Caco-2 (cell line): ENCODE measurements at regions of chr3 and their contacts with region 1.

Region 1: DNA sequence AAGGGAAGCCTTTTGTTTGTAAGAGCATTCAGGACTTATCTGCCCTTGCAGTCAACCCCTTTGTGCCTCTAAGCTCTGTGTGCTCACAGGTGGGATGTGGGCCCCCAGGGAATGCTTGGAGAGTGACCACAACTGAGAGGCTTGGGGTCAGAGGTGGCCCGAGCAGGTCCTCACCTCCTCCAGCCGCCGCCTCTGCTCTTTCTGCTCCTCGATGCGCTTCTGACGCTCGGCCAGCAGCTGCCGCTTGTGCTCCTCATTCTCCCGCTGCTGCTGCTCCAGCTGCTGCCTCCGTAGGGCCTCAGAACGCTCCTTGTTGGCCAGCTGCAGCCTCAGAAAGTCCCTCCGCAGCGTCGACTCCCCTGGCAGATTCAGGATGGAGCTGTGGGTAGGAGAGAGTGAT is 130.8 kb upstream of the SLC2A2 start:
- DNase-seq: peak; percentile 82 to 89
- H3K4me3 ChIP-seq: no peak overlapping the region
- H3K4me3 Mint-ChIP-seq: no peak overlapping the region
- H3K27ac Mint-ChIP-seq: peak overlapping the region; percentile 97
- H3K4me1 ChIP-seq: peaks cover 31% of the 10 kb centered on the region
- H3K4me1 Mint-ChIP-seq: peaks cover 17% of the 10 kb centered on the region
- H3K27me3 ChIP-seq: no peaks in the 10 kb centered on the region
- H3K27me3 Mint-ChIP-seq: no peaks in the 10 kb centered on the region
- CTCF ChIP-seq: no peak

Region 2: GRCh38 chr3:171055336-171056178 is 101.7 kb before region 1 on chr3:
- CTCF ChIA-PET with region 1: no interaction called
- POLR2A ChIA-PET with region 1: no interaction called
- intact Hi-C with region 1: loop called (anchors 1 kb)
- DNase-seq: peak; percentile 44 to 56
- H3K4me3 ChIP-seq: no peak overlapping the region
- H3K4me3 Mint-ChIP-seq: no peak overlapping the region
- H3K27ac Mint-ChIP-seq: no peak overlapping the region
- H3K4me1 ChIP-seq: peaks cover 73% of the 10 kb centered on the region
- H3K4me1 Mint-ChIP-seq: peaks cover 9% of the 10 kb centered on the region
- H3K27me3 ChIP-seq: no peaks in the 10 kb centered on the region
- H3K27me3 Mint-ChIP-seq: no peaks in the 10 kb centered on the region
- CTCF ChIP-seq: no peak

Region 3: GRCh38 chr3:171187706-171188290 is 30.5 kb after region 1 on chr3:
- CTCF ChIA-PET with region 1: no interaction called
- POLR2A ChIA-PET with region 1: no interaction called
- intact Hi-C with region 1: loop called (anchors 2 kb)
- DNase-seq: peak in 1 of 2 experiments; percentile 45
- H3K4me3 ChIP-seq: no peak overlapping the region
- H3K4me3 Mint-ChIP-seq: no peak overlapping the region
- H3K27ac Mint-ChIP-seq: no peak overlapping the region
- H3K4me1 ChIP-seq: peaks cover 22% of the 10 kb centered on the region
- H3K4me1 Mint-ChIP-seq: peaks cover 13% of the 10 kb centered on the region
- H3K27me3 ChIP-seq: no peaks in the 10 kb centered on the region
- H3K27me3 Mint-ChIP-seq: no peaks in the 10 kb centered on the region
- CTCF ChIP-seq: peak; percentile 59

Region 4: GRCh38 chr3:171543759-171544654 is 386.7 kb after region 1 on chr3:
- CTCF ChIA-PET with region 1: interaction called, 14 read pairs
- POLR2A ChIA-PET with region 1: no interaction called
- intact Hi-C with region 1: no loop called
- DNase-seq: no peak
- H3K4me3 ChIP-seq: no peak overlapping the region
- H3K4me3 Mint-ChIP-seq: no peak overlapping the region
- H3K27ac Mint-ChIP-seq: no peak overlapping the region
- H3K4me1 ChIP-seq: 0 out of 2 replicates have a peak, but pooled peaks cover 3% of the 10 kb centered on the region
- H3K4me1 Mint-ChIP-seq: no peaks in the 10 kb centered on the region
- H3K27me3 ChIP-seq: no peaks in the 10 kb centered on the region
- H3K27me3 Mint-ChIP-seq: no peaks in the 10 kb centered on the region
- CTCF ChIP-seq: no peak